Activated naive CD4-positive, alpha-beta T cell treated with anti-CD3 and anti-CD28 coated beads for 36 hours (primary cell): ENCODE measurements at regions of chr4 and their contacts with region 1.

Region 1: GRCh38 chr4:7067452-7068278 is at the start of gene GRPEL1:
- DNase-seq: peak; percentile 100
- H3K4me3 Mint-ChIP-seq: peak within 1 kb of the TSS; percentile 96
- H3K27ac Mint-ChIP-seq: peak within 1 kb of the TSS; percentile 89
- H3K4me1 Mint-ChIP-seq: peaks cover 39% of the 10 kb centered on the region
- H3K27me3 Mint-ChIP-seq: no peaks in the 10 kb centered on the region
- total RNA-seq, gene GRPEL1: 53.7 to 53.9 TPM

Region 2: GRCh38 chr4:6716018-6716911 is 351.4 kb before region 1 on chr4 and contains the start of gene BLOC1S4:
- CTCF ChIA-PET with region 1: interaction called, 30 read pairs
- intact Hi-C with region 1: loop called (anchors 1 kb)
- DNase-seq: peak; percentile 88
- H3K4me3 Mint-ChIP-seq: peak within 1 kb of the TSS; percentile 96
- H3K27ac Mint-ChIP-seq: peak within 1 kb of the TSS; percentile 95
- H3K4me1 Mint-ChIP-seq: peaks cover 26% of the 10 kb centered on the region
- H3K27me3 Mint-ChIP-seq: no peaks in the 10 kb centered on the region
- total RNA-seq, gene BLOC1S4: 11.0 to 11.8 TPM

Region 3: GRCh38 chr4:6794189-6794588 is 273.5 kb before region 1 on chr4:
- CTCF ChIA-PET with region 1: no interaction called
- intact Hi-C with region 1: no loop called
- DNase-seq: no peak
- H3K4me3 Mint-ChIP-seq: no peak overlapping the region
- H3K27ac Mint-ChIP-seq: no peak overlapping the region
- H3K4me1 Mint-ChIP-seq: peaks cover 46% of the 10 kb centered on the region
- H3K27me3 Mint-ChIP-seq: no peaks in the 10 kb centered on the region

Region 4: DNA sequence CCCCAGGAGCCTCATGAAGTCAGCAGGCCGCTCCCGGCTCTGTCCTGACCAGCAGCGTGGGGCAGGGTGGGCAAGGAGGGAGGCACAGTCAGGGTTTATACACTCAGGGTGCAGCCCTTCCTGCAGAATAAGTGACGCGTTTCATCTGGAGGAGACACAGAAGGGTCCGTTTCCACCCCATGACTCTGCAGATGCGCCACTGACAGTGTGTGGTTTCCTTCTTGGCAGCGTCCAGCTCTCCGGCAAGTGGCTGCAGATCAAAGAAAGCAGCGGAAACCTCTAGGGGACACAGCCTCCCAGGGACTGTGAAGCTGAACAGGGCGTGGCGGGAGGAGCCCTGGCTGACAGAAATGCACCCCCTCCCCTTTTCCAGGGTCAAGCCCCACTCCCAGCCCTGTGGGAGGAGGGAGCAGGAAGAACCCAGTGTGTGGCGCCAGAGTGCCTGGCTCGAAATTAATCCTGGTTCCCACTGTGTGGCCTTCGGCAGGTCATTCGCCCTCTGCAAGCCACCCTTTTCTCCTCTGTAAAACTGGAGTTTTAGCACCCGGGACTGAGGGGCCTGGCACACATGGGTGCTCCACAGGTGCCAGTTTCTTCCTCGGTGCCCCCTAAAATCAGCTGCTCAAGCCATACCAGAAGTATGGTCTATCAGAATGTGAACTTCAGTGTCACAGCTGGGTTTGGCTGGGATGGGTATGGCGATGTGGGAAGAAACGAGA is 175.3 kb before region 1 on chr4:
- CTCF ChIA-PET with region 1: interaction called, 3 read pairs
- intact Hi-C with region 1: loop called (anchors 1 kb)
- DNase-seq: peak; percentile 55
- H3K4me3 Mint-ChIP-seq: no peak overlapping the region
- H3K27ac Mint-ChIP-seq: no peak overlapping the region
- H3K4me1 Mint-ChIP-seq: peaks cover 17% of the 10 kb centered on the region
- H3K27me3 Mint-ChIP-seq: no peaks in the 10 kb centered on the region

Region 5: DNA sequence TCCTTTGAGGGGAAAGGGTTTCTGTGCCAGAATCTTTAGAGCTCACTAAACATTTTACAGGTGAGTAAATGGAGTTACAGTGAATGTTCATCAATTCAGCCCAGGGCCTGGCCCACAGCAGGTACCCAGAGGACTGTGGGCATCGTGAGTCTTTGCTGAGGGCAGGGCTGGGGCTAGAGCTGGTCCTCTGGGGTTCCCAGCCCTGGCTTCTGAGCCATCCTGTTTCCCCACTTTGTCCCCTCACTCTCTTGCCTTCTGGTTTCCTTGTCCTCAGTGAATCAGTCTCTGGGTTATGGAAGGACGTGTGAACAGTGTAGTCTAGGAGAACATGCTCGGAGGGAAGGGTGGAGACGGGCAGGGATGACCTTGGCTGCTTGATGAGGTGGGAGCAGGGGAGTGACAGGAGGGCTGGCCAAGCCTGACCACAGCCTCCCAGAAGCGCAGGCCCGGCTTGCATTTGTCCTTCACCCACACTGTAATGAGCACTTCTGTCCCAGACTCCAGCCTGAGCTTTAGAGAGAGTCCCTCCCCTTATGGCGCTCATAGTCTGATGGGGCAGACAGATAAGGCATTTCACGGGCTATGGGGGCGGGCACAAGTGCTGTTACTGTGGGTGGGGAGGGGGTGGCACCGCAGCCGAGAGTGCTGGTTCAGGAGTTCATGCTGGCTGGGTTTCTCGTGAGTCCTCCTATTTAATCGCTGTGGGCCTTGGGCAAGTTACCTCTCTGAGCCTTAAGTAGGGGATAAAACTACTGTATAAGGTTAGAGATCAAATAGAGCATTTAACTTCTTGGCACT is 140.8 kb before region 1 on chr4:
- CTCF ChIA-PET with region 1: interaction called, 3 read pairs
- intact Hi-C with region 1: loop called (anchors 1 kb)
- DNase-seq: peak; percentile 74
- H3K4me3 Mint-ChIP-seq: peak overlapping the region; percentile 49
- H3K27ac Mint-ChIP-seq: peak overlapping the region; percentile 85
- H3K4me1 Mint-ChIP-seq: peaks cover 67% of the 10 kb centered on the region
- H3K27me3 Mint-ChIP-seq: no peaks in the 10 kb centered on the region

Region 6: GRCh38 chr4:6986781-6987587 is 80.7 kb before region 1 on chr4:
- CTCF ChIA-PET with region 1: interaction called, 6 read pairs
- intact Hi-C with region 1: loop called (anchors 1 kb)
- DNase-seq: peak; percentile 94
- H3K4me3 Mint-ChIP-seq: peak overlapping the region; percentile 94
- H3K27ac Mint-ChIP-seq: peak overlapping the region; percentile 93
- H3K4me1 Mint-ChIP-seq: peaks cover 70% of the 10 kb centered on the region
- H3K27me3 Mint-ChIP-seq: no peaks in the 10 kb centered on the region

Region 7: DNA sequence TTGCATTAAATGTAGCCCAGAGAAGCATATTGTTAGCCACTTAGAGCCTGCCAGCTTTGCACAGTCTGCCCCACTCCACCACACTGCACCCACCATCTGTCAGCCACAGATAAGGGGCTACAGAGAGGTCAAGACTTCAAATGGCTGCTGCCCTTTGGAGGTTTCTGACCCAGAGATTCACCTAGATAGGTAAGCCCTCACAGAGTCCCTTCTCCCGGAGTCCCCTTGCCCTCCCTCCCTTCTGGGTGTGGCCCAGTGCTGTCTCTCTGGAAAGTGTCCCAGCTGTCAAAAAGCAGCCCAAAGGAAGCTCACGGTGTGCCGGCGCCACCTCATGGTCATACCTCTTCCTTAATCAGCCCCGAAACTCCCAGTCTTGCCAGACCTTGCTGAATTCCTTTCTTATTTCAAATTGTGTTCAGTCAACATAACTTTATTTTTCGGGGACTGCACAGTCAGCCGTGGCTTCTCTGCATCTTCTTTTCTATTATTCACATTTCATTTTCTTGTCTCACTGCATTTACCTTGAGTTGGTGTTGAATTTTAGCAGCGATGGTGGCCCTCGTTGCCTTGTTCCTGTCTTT is 14.3 kb after region 1 on chr4:
- CTCF ChIA-PET with region 1: interaction called, 39 read pairs
- intact Hi-C with region 1: no loop called
- DNase-seq: peak; percentile 69
- H3K4me3 Mint-ChIP-seq: no peak overlapping the region
- H3K27ac Mint-ChIP-seq: no peak overlapping the region
- H3K4me1 Mint-ChIP-seq: no peaks in the 10 kb centered on the region
- H3K27me3 Mint-ChIP-seq: peaks cover 18% of the 10 kb centered on the region

Region 8: GRCh38 chr4:7161721-7162214 is 94.1 kb after region 1 on chr4:
- CTCF ChIA-PET with region 1: no interaction called
- intact Hi-C with region 1: no loop called
- DNase-seq: no peak
- H3K4me3 Mint-ChIP-seq: no peak overlapping the region
- H3K27ac Mint-ChIP-seq: no peak overlapping the region
- H3K4me1 Mint-ChIP-seq: no peaks in the 10 kb centered on the region
- H3K27me3 Mint-ChIP-seq: peaks cover 4% of the 10 kb centered on the region